ENCODE measurements at regions of chr15 and their contacts with region 1.

Region 1: GRCh38 chr15:66679657-66680108 is 22.4 kb upstream of the SMAD6 start:
- DNase-seq: peak; percentile 82 to 91
- H3K4me3 ChIP-seq: no peak overlapping the region
- H3K4me3 Mint-ChIP-seq: peak overlapping the region; percentile 46
- H3K27ac Mint-ChIP-seq: peak overlapping the region; percentile 83
- H3K4me1 ChIP-seq: peaks cover 29% of the 10 kb centered on the region
- H3K4me1 Mint-ChIP-seq: peaks cover 21% of the 10 kb centered on the region
- H3K27me3 ChIP-seq: no peaks in the 10 kb centered on the region
- H3K27me3 Mint-ChIP-seq: no peaks in the 10 kb centered on the region
- CTCF ChIP-seq: no peak

Region 2: DNA sequence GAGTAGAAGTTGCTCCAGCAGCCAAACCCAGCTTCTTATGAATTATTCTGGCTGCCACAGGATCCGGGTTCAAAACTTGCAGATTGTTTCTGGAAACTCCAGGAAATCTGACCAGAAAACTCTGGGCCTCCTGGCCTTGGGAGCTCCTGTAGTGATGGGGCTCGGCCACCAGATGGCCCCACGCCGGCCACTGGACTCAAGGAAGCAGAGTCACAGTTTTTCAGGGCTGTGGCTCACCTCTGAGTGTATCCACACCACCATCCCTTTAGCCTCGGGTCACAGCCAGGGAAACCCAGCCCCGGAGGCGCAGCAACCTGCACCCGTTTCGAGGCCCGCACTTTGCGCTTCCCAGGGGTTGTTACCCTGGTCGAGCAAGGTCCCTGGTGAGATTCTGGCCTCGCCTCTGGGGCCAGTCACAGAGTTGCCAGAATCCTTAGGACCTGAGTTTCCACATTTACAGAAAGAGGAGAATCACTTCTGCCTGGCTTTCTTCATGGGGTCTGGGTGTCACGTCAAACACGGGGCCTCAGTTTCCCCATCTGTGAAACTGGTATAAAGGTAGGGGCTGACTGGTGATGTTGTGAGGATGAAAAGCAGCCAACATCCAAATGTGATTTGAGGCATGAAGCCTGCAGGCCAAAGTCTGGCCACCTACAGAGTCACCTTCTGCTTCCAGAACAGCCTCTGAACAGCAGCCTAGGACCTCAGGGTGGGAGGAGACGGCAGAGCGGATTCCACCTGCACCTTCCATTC is 60.4 kb before region 1 on chr15:
- CTCF ChIA-PET with region 1: interaction called, 11 read pairs
- POLR2A ChIA-PET with region 1: no interaction called
- intact Hi-C with region 1: no loop called
- DNase-seq: peak; percentile 80 to 84
- H3K4me3 ChIP-seq: no peak overlapping the region
- H3K4me3 Mint-ChIP-seq: no peak overlapping the region
- H3K27ac Mint-ChIP-seq: no peak overlapping the region
- H3K4me1 ChIP-seq: peaks cover 20% of the 10 kb centered on the region
- H3K4me1 Mint-ChIP-seq: no peaks in the 10 kb centered on the region
- H3K27me3 ChIP-seq: no peaks in the 10 kb centered on the region
- H3K27me3 Mint-ChIP-seq: no peaks in the 10 kb centered on the region
- CTCF ChIP-seq: peak; percentile 76 to 90

Measured in Caco-2 (cell line).